Activated CD4-positive, alpha-beta T cell treated with anti-CD3 and anti-CD28 coated beads, Interleukin-2, amount 10 ng/mL, durations not matched to agents 24 days and 14 days (primary cell): ENCODE measurements at regions of chr22 and their contacts with region 1.

Region 1: GRCh38 chr22:25747245-25747944 is 5.4 kb downstream of the MYO18B start:
- DNase-seq: no peak
- H3K4me3 Mint-ChIP-seq: no peak overlapping the region
- H3K27ac Mint-ChIP-seq: peak overlapping the region; percentile 100
- H3K4me1 Mint-ChIP-seq: peaks cover 74% of the 10 kb centered on the region
- H3K27me3 Mint-ChIP-seq: no peaks in the 10 kb centered on the region

Region 2: DNA sequence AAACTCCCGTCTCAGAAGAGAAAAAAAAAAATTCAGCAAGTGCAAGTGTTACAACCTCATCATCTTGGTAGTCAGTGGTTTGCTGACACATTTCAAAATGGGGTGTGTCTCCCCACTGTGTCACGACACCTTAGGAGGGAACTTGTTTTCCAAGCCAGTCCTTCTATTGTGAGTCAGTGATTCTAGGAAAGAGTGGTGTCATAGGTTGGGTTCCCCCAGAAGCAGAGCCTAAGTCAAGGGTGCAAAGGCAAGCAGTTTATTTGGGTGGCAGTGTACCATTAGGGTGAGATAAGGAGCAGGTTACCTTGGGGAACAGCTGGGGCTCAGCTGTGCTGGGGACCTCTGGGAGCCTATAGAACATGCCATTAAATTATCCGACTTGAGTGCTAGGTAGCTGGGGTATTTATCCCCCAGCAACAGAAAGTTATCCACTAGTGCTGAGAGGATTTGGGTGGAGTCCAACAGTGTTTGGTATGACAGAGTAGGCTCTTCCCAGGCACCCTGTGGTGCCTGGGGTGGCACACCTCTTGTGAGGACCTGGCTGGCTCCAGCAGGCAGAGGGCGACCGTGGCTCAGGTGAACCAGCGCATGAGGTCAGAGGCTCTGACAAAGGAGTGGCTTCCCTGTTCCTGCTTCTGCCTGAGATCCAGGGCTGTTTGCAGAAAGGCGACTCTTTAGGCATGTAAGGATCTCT is 753.2 kb before region 1 on chr22:
- intact Hi-C with region 1: loop called (anchors 5 kb)
- DNase-seq: peak; percentile 89
- H3K4me3 Mint-ChIP-seq: peak overlapping the region; percentile 53
- H3K27ac Mint-ChIP-seq: peak overlapping the region; percentile 87
- H3K4me1 Mint-ChIP-seq: peaks cover 50% of the 10 kb centered on the region
- H3K27me3 Mint-ChIP-seq: peaks cover 6% of the 10 kb centered on the region

Region 3: DNA sequence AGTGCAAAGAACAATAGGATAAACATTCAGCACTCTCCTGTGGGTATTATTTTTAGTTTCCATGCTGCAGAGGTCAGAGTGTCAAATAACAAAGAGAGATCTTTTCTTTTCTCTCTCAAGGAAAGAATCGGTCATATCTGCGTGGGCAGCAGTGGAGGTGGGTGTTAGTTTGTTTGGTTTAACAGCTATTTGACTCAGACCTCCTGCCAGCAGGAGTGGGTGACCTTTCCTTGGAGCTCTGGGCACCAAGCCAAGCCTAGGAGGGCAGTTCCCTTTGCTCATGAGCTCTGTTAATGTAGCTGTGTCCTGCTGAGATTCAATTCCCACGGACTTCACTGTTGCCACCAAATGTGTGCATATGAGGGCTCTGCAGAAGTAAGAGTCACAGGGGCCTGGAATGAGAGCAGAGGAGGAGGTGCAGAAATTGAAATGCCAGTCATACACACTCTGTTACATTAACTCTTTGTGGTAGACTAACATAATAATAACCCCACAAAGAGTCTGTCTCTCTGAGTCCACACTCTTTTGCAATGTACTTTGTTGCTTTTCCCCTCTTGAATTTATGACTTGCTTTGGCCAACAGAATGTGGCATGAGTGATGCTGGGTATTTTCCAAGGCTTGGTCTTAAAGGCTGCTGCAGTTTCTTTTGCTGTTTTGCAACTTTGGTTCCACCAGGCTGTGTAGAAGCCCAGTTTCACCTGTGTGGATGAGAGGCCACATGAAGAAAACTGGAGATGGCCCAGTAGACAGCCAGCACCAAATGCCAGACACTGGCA is 259.0 kb before region 1 on chr22:
- intact Hi-C with region 1: loop called (anchors 2 kb)
- DNase-seq: peak; percentile 62
- H3K4me3 Mint-ChIP-seq: peak overlapping the region; percentile 65
- H3K27ac Mint-ChIP-seq: peak overlapping the region; percentile 89
- H3K4me1 Mint-ChIP-seq: peaks cover 57% of the 10 kb centered on the region
- H3K27me3 Mint-ChIP-seq: peaks cover 3% of the 10 kb centered on the region

Region 4: GRCh38 chr22:25623310-25623734 is 124.1 kb before region 1 on chr22:
- intact Hi-C with region 1: loop called (anchors 1 kb)
- DNase-seq: peak; percentile 63
- H3K4me3 Mint-ChIP-seq: no peak overlapping the region
- H3K27ac Mint-ChIP-seq: peak overlapping the region; percentile 25
- H3K4me1 Mint-ChIP-seq: peaks cover 47% of the 10 kb centered on the region
- H3K27me3 Mint-ChIP-seq: no peaks in the 10 kb centered on the region

Region 5: GRCh38 chr22:25736378-25737011 is 10.9 kb before region 1 on chr22:
- intact Hi-C with region 1: loop called (anchors 1 kb)
- DNase-seq: peak; percentile 92
- H3K4me3 Mint-ChIP-seq: peak overlapping the region; percentile 71
- H3K27ac Mint-ChIP-seq: peak overlapping the region; percentile 98
- H3K4me1 Mint-ChIP-seq: peaks cover 48% of the 10 kb centered on the region
- H3K27me3 Mint-ChIP-seq: no peaks in the 10 kb centered on the region